ENCODE measurements at regions of chr2 and their contacts with region 1.

Region 1: GRCh38 chr2:203782262-203782976 is 76.0 kb downstream of the CD28 start:
- DNase-seq: peak; percentile 90
- H3K4me3 ChIP-seq: no peak overlapping the region
- H3K27ac ChIP-seq: no peak overlapping the region
- H3K4me1 ChIP-seq: peaks cover 18% of the 10 kb centered on the region
- H3K27me3 ChIP-seq: no peaks in the 10 kb centered on the region
- CTCF ChIP-seq: peak; percentile 74 to 77
- POLR2A ChIP-seq: no peak

Region 2: DNA sequence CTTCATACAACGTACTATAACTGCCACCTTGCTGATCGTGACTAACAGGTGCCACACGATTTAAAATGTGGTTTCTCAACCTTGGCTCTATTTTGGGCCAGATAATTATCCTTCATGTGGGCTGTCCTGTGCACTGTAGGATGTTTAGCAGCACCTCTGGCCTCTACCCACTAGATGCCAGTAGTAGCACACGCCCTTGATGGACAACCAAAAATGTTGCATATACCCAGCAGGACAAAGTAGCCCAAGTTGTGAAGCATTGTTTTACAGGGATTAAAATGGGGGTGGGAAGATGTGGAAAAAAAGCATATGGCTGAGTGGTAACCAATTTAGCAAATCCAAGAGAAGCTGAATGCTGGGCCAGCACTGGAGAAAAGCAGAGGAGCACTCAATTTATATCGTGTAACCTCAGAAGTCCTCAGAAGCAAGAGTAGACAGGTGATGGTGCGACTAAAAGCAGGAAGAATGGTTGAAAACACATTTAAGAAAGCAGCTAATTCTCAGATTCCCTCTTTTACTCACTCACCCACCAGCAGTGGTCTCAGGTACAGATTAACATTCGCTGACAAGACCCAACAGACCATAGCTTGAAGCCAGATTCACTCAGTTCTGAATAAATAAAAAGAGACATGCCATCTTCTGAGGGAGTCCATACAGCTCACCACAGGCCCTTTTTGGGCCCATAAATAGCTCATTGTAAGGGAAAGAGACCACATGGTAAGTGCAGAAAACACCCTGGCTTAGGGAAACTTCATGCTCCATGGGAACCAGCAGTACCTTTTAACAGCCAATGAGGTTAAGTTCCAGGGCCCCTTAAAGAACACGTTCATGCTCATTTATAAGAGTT is 297.9 kb before region 1 on chr2:
- CTCF ChIA-PET with region 1: interaction called, 4 read pairs
- POLR2A ChIA-PET with region 1: no interaction called
- dilution Hi-C with region 1: no loop called
- intact Hi-C with region 1: loop called (anchors 5 kb)
- DNase-seq: peak; percentile 45
- H3K4me3 ChIP-seq: no peak overlapping the region
- H3K27ac ChIP-seq: no peak overlapping the region
- H3K4me1 ChIP-seq: no peaks in the 10 kb centered on the region
- H3K27me3 ChIP-seq: no peaks in the 10 kb centered on the region
- CTCF ChIP-seq: peak; percentile 23 to 51
- POLR2A ChIP-seq: no peak

Region 3: DNA sequence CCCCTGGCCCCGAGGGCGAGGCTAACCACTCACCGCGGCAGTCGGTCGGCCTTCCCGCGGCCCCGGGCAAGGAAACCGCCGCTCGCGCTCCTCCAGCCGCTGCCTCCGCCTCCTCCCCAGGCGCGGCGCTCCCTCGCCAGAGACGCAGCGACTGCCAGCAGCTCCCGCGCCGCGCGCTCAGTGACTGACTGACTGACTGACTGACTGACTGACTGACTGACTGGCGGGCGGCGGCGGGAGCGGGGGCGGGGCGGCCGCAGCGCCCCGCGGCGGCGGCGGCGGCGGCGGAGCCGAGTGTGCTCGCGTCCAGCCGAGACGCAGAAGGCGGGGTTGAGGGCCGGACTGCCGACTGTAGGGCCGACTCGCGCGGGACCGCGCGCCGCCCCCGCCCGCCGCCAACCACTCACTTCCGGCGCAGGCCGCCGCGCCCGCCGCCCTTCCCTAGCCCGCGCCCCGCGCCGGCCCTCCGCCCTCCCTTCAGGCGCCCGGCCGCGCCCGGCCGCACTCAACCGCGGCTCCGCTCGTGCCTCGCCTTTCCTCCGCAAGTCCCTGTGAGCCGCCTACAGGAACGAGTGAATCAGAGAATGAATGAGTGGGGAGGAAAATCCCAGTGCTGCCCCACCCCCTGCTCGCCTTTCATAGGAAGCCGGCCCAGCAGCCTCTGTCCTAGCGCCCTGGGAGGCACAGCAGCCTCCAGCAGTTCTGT is 247.2 kb before region 1 on chr2 and contains the start of gene RAPH1:
- CTCF ChIA-PET with region 1: no interaction called
- POLR2A ChIA-PET with region 1: no interaction called
- dilution Hi-C with region 1: no loop called
- intact Hi-C with region 1: loop called (anchors 1 kb)
- DNase-seq: peak; percentile 85
- H3K4me3 ChIP-seq: peak within 1 kb of the TSS; percentile 93 to 100 (median 98)
- H3K27ac ChIP-seq: peak within 1 kb of the TSS; percentile 81
- H3K4me1 ChIP-seq: peaks cover 18% of the 10 kb centered on the region
- H3K27me3 ChIP-seq: no peaks in the 10 kb centered on the region
- CTCF ChIP-seq: no peak
- POLR2A ChIP-seq: peak; percentile 86
- total RNA-seq, gene RAPH1: 56.9 and 59.5 TPM in 2 replicates

Region 4: GRCh38 chr2:203808046-203808750 is 25.8 kb after region 1 on chr2:
- CTCF ChIA-PET with region 1: interaction called, 11 read pairs
- POLR2A ChIA-PET with region 1: no interaction called
- dilution Hi-C with region 1: no loop called
- intact Hi-C with region 1: loop called (anchors 1 kb)
- DNase-seq: peak; percentile 85
- H3K4me3 ChIP-seq: no peak overlapping the region
- H3K27ac ChIP-seq: peak overlapping the region; percentile 44
- H3K4me1 ChIP-seq: peaks cover 55% of the 10 kb centered on the region
- H3K27me3 ChIP-seq: no peaks in the 10 kb centered on the region
- CTCF ChIP-seq: no peak
- POLR2A ChIP-seq: no peak